Thyroid gland (tissue), 4 donors: ENCODE measurements at regions of chr7 and their contacts with region 1.

Region 1: GRCh38 chr7:64183126-64183742 is 23.8 kb upstream of the ZNF735 start:
- DNase-seq: no peak
- H3K4me3 ChIP-seq: no peak overlapping the region
- H3K27ac ChIP-seq: no peak overlapping the region
- H3K4me1 ChIP-seq: no peaks in the 10 kb centered on the region
- H3K27me3 ChIP-seq: no peaks in the 10 kb centered on the region
- CTCF ChIP-seq: peak; percentile 16 to 59 (median 28)
- POLR2A ChIP-seq: no peak

Region 2: GRCh38 chr7:63846171-63846570 is 337.1 kb before region 1 on chr7:
- intact Hi-C with region 1: no loop called
- DNase-seq: no peak
- H3K4me3 ChIP-seq: no peak overlapping the region
- H3K27ac ChIP-seq: no peak overlapping the region
- H3K4me1 ChIP-seq: no peaks in the 10 kb centered on the region
- H3K27me3 ChIP-seq: no peaks in the 10 kb centered on the region
- CTCF ChIP-seq: no peak
- POLR2A ChIP-seq: no peak

Region 3: GRCh38 chr7:64619705-64620104 is 436.5 kb after region 1 on chr7:
- intact Hi-C with region 1: loop called (anchors 5 kb)
- DNase-seq: no peak
- H3K4me3 ChIP-seq: no peak overlapping the region
- H3K27ac ChIP-seq: no peak overlapping the region
- H3K4me1 ChIP-seq: no peaks in the 10 kb centered on the region
- H3K27me3 ChIP-seq: no peaks in the 10 kb centered on the region
- CTCF ChIP-seq: no peak
- POLR2A ChIP-seq: no peak